ENCODE measurements at regions of chr7 and their contacts with region 1.

Region 1: GRCh38 chr7:133853706-133854276 is 273.3 kb upstream of the LRGUK start:
- DNase-seq: peak; percentile 89
- H3K4me3 Mint-ChIP-seq: peak overlapping the region; percentile 63
- H3K27ac Mint-ChIP-seq: peak overlapping the region; percentile 99
- H3K4me1 Mint-ChIP-seq: peaks cover 44% of the 10 kb centered on the region
- H3K27me3 Mint-ChIP-seq: no peaks in the 10 kb centered on the region
- CTCF ChIP-seq: peak; percentile 76

Region 2: GRCh38 chr7:133252858-133253518 is 600.8 kb before region 1 on chr7 and contains the start of gene EXOC4:
- CTCF ChIA-PET with region 1: no interaction called
- intact Hi-C with region 1: loop called (anchors 10 kb)
- DNase-seq: peak; percentile 92
- H3K4me3 Mint-ChIP-seq: peak within 1 kb of the TSS; percentile 86
- H3K27ac Mint-ChIP-seq: peak within 1 kb of the TSS; percentile 85
- H3K4me1 Mint-ChIP-seq: peaks cover 14% of the 10 kb centered on the region
- H3K27me3 Mint-ChIP-seq: no peaks in the 10 kb centered on the region
- CTCF ChIP-seq: no peak
- total RNA-seq, gene EXOC4: 91.9 and 92.0 TPM in 2 replicates

Region 3: GRCh38 chr7:133571076-133571475 is 282.7 kb before region 1 on chr7:
- CTCF ChIA-PET with region 1: no interaction called
- intact Hi-C with region 1: loop called (anchors 2 kb)
- DNase-seq: no peak
- H3K4me3 Mint-ChIP-seq: no peak overlapping the region
- H3K27ac Mint-ChIP-seq: no peak overlapping the region
- H3K4me1 Mint-ChIP-seq: peaks cover 38% of the 10 kb centered on the region
- H3K27me3 Mint-ChIP-seq: no peaks in the 10 kb centered on the region
- CTCF ChIP-seq: no peak

Region 4: DNA sequence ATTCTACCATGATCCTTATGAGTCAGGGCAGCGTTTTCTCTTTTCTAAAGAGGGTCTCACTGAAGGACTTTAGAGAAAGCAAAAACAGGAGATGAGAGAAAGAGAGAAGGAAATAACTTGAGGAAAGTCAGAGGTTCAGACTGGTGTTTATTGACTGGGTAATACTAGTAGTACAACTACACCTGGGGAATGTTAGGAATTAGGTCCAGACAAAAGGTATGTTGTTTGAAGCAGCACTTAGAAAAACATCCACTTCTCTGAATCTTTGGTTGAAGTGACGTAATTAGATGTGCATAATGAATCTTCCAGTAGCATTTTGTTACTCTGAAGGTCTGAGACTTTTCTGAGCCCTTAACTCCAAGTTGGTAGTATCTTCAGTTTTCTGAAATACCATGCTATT is 106.9 kb before region 1 on chr7:
- CTCF ChIA-PET with region 1: interaction called, 5 read pairs
- intact Hi-C with region 1: loop called (anchors 1 kb)
- DNase-seq: peak; percentile 4
- H3K4me3 Mint-ChIP-seq: peak overlapping the region; percentile 56
- H3K27ac Mint-ChIP-seq: peak overlapping the region; percentile 92
- H3K4me1 Mint-ChIP-seq: peaks cover 69% of the 10 kb centered on the region
- H3K27me3 Mint-ChIP-seq: no peaks in the 10 kb centered on the region
- CTCF ChIP-seq: no peak

Region 5: GRCh38 chr7:133973710-133974109 is 119.9 kb after region 1 on chr7:
- CTCF ChIA-PET with region 1: no interaction called
- intact Hi-C with region 1: no loop called
- DNase-seq: no peak
- H3K4me3 Mint-ChIP-seq: no peak overlapping the region
- H3K27ac Mint-ChIP-seq: no peak overlapping the region
- H3K4me1 Mint-ChIP-seq: no peaks in the 10 kb centered on the region
- H3K27me3 Mint-ChIP-seq: no peaks in the 10 kb centered on the region
- CTCF ChIP-seq: no peak

Region 6: DNA sequence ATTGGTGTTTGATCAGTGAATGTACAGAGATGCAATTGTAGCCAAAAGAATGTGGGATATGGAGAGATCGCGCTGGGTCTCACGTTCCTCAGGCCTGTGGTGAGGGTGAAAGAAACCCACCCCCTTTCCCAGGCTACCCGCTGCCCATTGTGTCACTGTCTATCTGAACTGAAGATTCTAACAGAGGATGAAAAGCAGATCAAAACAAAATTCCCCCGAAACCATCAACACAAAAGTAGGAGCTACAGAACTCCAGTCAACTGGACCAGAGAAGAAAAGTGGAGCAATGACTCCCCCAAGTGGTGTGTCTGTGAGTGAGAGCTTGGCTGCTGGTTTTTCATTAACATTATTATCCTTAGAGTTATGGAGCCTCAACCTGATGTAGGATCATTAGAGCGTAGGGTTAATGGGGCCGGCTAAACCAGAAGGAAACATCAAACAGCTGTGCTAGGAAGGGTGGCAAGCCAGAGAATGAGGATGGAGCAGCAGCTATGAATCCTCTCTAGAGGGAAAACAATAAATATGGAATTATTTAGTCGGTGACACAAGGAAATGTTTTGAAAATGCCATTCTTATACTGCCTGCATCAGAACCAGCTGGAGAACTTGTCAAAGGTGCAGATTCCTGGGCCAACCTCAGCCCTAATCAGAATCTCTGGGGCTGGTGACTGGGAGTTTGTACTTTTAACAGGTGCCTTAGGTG is 566.8 kb after region 1 on chr7:
- CTCF ChIA-PET with region 1: interaction called, 3 read pairs
- intact Hi-C with region 1: loop called (anchors 5 kb)
- DNase-seq: peak; percentile 77
- H3K4me3 Mint-ChIP-seq: peak overlapping the region; percentile 29
- H3K27ac Mint-ChIP-seq: peak overlapping the region; percentile 2
- H3K4me1 Mint-ChIP-seq: peaks cover 34% of the 10 kb centered on the region
- H3K27me3 Mint-ChIP-seq: no peaks in the 10 kb centered on the region
- CTCF ChIP-seq: peak; percentile 58